ENCODE measurements at regions of chr21 and their contacts with region 1.

Region 1: GRCh38 chr21:34745557-34746255 is 76.9 kb downstream of the CLIC6 start:
- DNase-seq: no peak
- H3K4me3 ChIP-seq: no peak overlapping the region
- H3K27me3 ChIP-seq: no peaks in the 10 kb centered on the region
- CTCF ChIP-seq: peak; percentile 87

Region 2: GRCh38 chr21:34553151-34553952 is 192.4 kb before region 1 on chr21:
- CTCF ChIA-PET with region 1: no interaction called
- POLR2A ChIA-PET with region 1: no interaction called
- DNase-seq: no peak
- H3K4me3 ChIP-seq: no peak overlapping the region
- H3K27me3 ChIP-seq: no peaks in the 10 kb centered on the region
- CTCF ChIP-seq: no peak

Region 3: DNA sequence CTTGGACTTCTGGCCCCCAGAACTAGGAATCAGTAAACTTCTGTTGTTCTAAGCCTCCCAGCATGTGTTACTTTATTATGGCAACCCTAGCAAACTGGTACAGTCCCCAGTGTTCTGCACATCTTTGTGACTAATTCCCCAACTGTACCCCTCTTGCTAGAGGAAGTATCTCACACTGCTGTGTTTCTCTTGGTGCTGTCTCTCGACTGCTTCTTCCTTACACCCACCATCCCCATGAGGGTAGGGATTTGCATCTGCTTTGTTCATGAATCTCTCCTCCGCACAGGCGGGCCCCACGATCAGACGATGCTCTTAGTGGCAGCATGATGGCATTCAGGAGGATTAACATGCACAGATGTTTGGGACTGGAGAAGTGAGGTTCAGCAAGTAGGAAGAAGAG is 30.2 kb before region 1 on chr21:
- CTCF ChIA-PET with region 1: no interaction called
- POLR2A ChIA-PET with region 1: no interaction called
- DNase-seq: no peak
- H3K4me3 ChIP-seq: no peak overlapping the region
- H3K27me3 ChIP-seq: no peaks in the 10 kb centered on the region
- CTCF ChIP-seq: no peak

Region 4: GRCh38 chr21:34732388-34732821 is 13.3 kb before region 1 on chr21:
- CTCF ChIA-PET with region 1: interaction called, 10 read pairs
- POLR2A ChIA-PET with region 1: no interaction called
- DNase-seq: no peak
- H3K4me3 ChIP-seq: no peak overlapping the region
- H3K27me3 ChIP-seq: no peaks in the 10 kb centered on the region
- CTCF ChIP-seq: no peak

Region 5: DNA sequence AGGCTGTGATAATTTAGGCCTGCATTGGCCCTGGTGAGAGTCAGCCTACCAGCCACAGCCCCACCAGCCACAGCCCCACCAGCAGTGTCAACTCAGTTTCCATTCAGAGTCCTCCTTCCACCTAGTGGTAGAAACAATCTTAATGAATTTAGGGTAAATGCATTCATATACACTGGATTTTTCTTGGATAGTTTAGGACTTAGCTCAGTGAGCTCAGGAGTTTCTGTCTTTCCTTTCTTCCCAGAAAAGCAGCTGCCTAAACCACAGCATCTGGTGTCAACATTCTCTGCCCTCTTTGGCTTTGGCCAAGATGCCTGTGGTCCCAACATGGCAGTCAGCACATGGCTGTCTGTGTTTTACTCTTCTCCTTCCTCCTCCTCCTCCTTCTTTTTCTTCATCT is 17.1 kb after region 1 on chr21:
- CTCF ChIA-PET with region 1: interaction called, 16 read pairs
- POLR2A ChIA-PET with region 1: interaction called, 3 read pairs
- DNase-seq: no peak
- H3K4me3 ChIP-seq: no peak overlapping the region
- H3K27me3 ChIP-seq: no peaks in the 10 kb centered on the region
- CTCF ChIP-seq: peak; percentile 32

Region 6: GRCh38 chr21:34795175-34795547 is 49.5 kb after region 1 on chr21:
- CTCF ChIA-PET with region 1: interaction called, 19 read pairs
- POLR2A ChIA-PET with region 1: no interaction called
- DNase-seq: no peak
- H3K4me3 ChIP-seq: no peak overlapping the region
- H3K27me3 ChIP-seq: no peaks in the 10 kb centered on the region
- CTCF ChIP-seq: no peak

Region 7: GRCh38 chr21:34888569-34889319 is 143.0 kb after region 1 on chr21:
- CTCF ChIA-PET with region 1: interaction called, 21 read pairs
- POLR2A ChIA-PET with region 1: no interaction called
- DNase-seq: peak; percentile 76
- H3K4me3 ChIP-seq: peak overlapping the region; percentile 97
- H3K27me3 ChIP-seq: no peaks in the 10 kb centered on the region
- CTCF ChIP-seq: no peak

Region 8: DNA sequence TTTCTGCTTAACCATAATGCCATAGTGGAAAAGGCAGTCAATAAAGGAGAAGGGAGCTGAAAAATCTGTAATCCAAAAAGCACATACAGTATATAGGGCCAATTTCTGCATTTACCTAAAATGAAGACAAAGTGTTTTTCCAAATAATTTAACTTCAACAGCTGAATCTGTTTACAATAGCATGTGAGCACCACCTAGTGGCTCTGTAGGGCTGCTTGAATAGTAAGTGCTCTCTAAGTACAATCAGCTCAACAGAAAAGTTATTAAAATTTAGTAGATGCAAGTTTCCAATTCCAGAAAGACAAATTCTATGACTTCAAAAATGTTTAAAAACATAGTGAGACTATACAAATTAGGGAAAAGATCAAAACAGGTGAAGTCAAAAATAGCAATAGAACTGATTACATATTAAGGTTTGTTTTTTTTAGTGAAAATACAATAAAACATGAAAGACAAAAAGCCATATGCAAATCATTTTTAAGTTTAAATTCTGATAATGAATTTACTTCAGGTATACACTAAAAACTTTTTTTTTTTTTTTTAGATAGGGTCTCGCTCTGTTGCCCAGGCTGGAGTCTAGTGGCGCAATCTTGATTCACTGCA is 1094.6 kb after region 1 on chr21:
- CTCF ChIA-PET with region 1: interaction called, 10 read pairs
- POLR2A ChIA-PET with region 1: no interaction called
- DNase-seq: peak; percentile 46
- H3K4me3 ChIP-seq: no peak overlapping the region
- H3K27me3 ChIP-seq: no peaks in the 10 kb centered on the region
- CTCF ChIP-seq: peak; percentile 82

Region 9: GRCh38 chr21:36028127-36029069 is 1282.7 kb after region 1 on chr21:
- CTCF ChIA-PET with region 1: interaction called, 11 read pairs
- POLR2A ChIA-PET with region 1: interaction called, 3 read pairs
- DNase-seq: no peak
- H3K4me3 ChIP-seq: no peak overlapping the region
- H3K27me3 ChIP-seq: no peaks in the 10 kb centered on the region
- CTCF ChIP-seq: peak; percentile 94